ENCODE measurements at regions of chr2 and their contacts with region 1.

Region 1: GRCh38 chr2:55049043-55049793 is 1.0 kb downstream of the RTN4 start:
- DNase-seq: peak; percentile 94
- H3K4me3 ChIP-seq: peak overlapping the region; percentile 88 to 97
- H3K27ac ChIP-seq: peak overlapping the region; percentile 99
- H3K4me1 ChIP-seq: peaks cover 16% of the 10 kb centered on the region
- H3K27me3 ChIP-seq: no peaks in the 10 kb centered on the region
- CTCF ChIP-seq: peak; percentile 50 to 75 (median 58)
- POLR2A ChIP-seq: peak; percentile 14

Region 2: DNA sequence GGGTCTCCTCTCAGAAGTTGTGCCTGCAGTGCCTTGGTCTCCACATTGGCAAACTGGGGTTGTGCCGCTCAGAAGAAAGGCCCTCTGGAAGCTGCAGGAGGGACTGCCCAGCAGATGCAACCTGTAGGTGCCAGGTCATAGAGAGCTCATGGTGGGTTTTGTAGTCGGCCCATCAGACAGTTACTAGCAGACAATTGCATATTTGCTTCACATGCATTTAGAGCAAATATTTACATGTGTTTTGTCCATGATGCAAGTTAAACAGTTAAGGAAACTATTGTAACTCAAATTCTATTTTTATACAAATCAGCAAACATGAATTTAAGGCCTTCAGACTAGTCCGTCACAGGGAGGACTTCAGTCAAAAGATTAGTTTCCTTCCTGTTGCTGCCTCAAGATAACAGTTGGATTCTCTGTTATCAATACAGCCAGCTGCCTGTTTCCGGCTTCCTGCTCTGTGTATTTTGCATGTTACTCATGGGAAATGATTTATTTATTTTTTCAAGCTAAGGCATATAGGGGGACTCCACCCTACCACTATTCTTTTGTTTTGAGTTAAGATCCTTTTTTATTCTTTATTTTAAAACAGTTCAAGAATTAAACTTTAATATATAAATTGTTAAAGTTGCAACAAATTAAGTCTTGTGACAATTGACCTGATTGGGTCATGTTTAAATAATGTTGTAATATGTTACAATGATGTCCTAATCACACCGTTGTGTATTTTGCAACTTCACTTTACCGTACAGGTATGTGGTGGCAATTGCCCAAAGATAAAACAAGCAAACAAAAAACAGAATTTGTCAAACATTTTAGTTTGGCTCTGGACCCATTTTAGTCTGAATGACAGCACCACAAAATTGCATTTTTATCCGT is 459.6 kb before region 1 on chr2:
- intact Hi-C with region 1: no loop called
- DNase-seq: no peak
- H3K4me3 ChIP-seq: no peak overlapping the region
- H3K27ac ChIP-seq: no peak overlapping the region
- H3K4me1 ChIP-seq: peaks cover 11% of the 10 kb centered on the region
- H3K27me3 ChIP-seq: no peaks in the 10 kb centered on the region
- CTCF ChIP-seq: no peak
- POLR2A ChIP-seq: no peak

Region 3: GRCh38 chr2:54866868-54867267 is 182.3 kb before region 1 on chr2:
- intact Hi-C with region 1: no loop called
- DNase-seq: no peak
- H3K4me3 ChIP-seq: no peak overlapping the region
- H3K27ac ChIP-seq: no peak overlapping the region
- H3K4me1 ChIP-seq: no peaks in the 10 kb centered on the region
- H3K27me3 ChIP-seq: no peaks in the 10 kb centered on the region
- CTCF ChIP-seq: no peak
- POLR2A ChIP-seq: no peak

Region 4: DNA sequence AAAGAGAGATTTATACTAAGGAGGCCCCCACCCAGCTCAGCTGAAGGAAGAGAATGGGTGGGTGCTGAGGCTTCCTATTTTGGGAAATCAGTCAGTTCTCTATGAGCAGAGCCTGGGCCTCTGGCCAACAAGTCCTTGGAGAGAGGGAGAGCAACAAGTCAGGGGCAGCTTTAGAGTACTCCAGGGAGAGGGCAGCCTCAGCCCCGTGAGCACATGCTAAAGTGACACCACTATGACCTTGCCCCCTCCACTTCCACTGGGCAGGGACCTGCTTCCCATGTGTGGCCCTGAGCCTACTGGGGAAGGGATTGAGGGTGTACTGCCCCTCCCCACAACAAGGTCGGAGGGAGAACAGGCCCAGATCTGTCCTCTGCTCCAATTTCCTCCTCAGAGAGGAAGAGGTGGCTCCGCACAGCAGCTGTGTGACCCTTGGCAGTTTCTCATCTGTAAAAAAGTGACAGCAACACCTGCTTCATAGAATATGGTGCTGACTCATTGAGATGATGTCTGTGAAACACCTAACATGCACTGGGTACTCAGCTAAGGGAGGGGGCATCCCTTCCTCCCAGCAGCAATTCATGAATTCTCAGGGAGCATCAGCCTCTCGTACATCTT is 109.9 kb after region 1 on chr2:
- intact Hi-C with region 1: loop called (anchors 10 kb)
- DNase-seq: peak; percentile 36
- H3K4me3 ChIP-seq: no peak overlapping the region
- H3K27ac ChIP-seq: no peak overlapping the region
- H3K4me1 ChIP-seq: peaks cover 11% of the 10 kb centered on the region
- H3K27me3 ChIP-seq: no peaks in the 10 kb centered on the region
- CTCF ChIP-seq: no peak
- POLR2A ChIP-seq: no peak

Measured in testis (tissue), 5 donors.